Caco-2 (cell line): ENCODE measurements at regions of chr1 and their contacts with region 1.

Region 1: DNA sequence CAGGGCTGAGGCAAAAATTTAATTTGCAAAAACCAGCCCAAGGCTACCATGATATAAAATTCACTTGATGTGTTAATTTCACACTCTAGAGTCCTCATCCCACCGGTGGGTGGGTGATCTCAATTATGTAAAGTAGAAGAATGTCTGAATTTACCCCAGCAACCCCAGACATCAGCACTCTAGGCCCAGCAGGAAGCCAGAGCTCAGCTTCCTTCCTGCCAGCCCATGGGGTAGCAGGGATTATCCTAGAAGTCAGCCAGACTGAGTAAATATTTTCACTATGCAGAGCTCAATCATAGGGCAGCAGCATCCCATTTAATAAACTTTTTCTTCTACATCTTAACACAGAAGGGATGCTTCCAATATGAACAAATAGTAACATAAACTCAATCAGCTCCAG is 71.0 kb downstream of the SIPA1L2 start:
- DNase-seq: no peak
- H3K4me3 ChIP-seq: no peak overlapping the region
- H3K4me3 Mint-ChIP-seq: no peak overlapping the region
- H3K27ac Mint-ChIP-seq: no peak overlapping the region
- H3K4me1 ChIP-seq: peaks cover 58% of the 10 kb centered on the region
- H3K4me1 Mint-ChIP-seq: peaks cover 40% of the 10 kb centered on the region
- H3K27me3 ChIP-seq: no peaks in the 10 kb centered on the region
- H3K27me3 Mint-ChIP-seq: no peaks in the 10 kb centered on the region
- CTCF ChIP-seq: no peak

Region 2: DNA sequence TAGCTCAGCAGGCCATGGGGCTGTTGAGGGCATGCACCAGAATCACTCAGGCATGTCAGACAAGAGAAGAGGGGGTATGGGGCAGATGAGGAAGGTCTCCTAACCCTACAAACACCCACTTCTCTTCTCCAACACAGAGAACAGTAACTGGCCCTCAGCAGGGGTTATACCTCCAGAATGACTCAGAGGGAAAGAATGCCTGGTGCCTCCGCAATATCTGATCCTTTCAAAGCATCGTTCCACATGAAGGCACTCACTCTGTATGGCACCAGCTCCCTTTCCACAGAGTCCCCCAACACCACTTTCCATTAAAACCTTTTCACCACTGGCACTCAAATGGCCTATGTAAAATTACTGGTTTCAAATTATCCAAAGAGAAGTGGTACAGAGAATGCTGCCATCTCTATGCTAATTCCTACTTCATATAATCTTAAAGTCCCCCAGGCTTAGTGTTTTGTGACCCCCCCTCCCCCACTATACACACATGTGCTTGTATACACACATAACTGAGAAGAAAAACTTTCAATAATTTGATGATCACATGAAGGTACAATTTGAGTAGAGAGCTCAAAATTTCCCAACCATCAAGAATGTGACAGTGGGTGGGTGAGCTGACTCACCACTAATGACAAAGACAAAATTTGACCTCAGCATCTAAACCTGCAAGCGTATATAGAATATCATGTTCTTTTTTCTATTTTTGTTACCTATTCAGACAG is 20.6 kb before region 1 on chr1:
- CTCF ChIA-PET with region 1: no interaction called
- POLR2A ChIA-PET with region 1: no interaction called
- intact Hi-C with region 1: no loop called
- DNase-seq: peak; percentile 28 to 38
- H3K4me3 ChIP-seq: no peak overlapping the region
- H3K4me3 Mint-ChIP-seq: no peak overlapping the region
- H3K27ac Mint-ChIP-seq: no peak overlapping the region
- H3K4me1 ChIP-seq: peaks cover 17% of the 10 kb centered on the region; the same call in 1 of the 2 replicates
- H3K4me1 Mint-ChIP-seq: peaks cover 46% of the 10 kb centered on the region
- H3K27me3 ChIP-seq: no peaks in the 10 kb centered on the region
- H3K27me3 Mint-ChIP-seq: no peaks in the 10 kb centered on the region
- CTCF ChIP-seq: no peak

Region 3: DNA sequence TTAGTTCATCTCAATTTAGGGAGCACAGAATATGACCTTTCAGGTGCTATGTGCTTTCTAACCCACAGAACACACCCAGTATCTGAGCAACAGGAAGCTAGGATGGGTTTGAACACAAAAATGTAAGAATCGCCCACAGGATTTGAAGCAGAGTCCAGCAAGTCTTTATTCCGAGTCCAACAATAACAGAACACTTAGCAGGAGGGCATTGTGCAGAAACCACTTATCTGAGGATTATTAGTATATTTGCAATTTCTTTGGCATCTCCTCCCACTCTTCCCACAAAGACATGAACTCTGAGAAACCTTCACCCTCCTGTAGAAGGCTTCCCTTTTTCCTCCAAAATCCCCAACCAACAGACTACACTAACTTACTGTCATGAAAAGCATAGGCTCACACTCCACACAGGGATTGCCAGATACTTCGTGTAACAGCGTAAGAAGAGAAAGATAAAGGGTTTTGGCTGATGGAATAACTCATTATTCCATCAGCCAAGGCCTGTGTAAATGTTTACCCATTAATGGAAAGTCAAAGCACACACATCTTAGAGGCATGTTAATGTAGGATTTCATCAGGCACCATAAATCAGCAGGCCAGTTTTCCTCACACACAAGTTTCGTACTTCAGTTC is 54.9 kb after region 1 on chr1:
- CTCF ChIA-PET with region 1: no interaction called
- POLR2A ChIA-PET with region 1: interaction called, 4 read pairs
- intact Hi-C with region 1: loop called (anchors 5 kb)
- DNase-seq: peak in 1 of 2 experiments; percentile 16
- H3K4me3 ChIP-seq: no peak overlapping the region
- H3K4me3 Mint-ChIP-seq: no peak overlapping the region
- H3K27ac Mint-ChIP-seq: peak overlapping the region; percentile 6
- H3K4me1 ChIP-seq: peaks cover 14% of the 10 kb centered on the region; the same call in 1 of the 2 replicates
- H3K4me1 Mint-ChIP-seq: peaks cover 21% of the 10 kb centered on the region
- H3K27me3 ChIP-seq: no peaks in the 10 kb centered on the region
- H3K27me3 Mint-ChIP-seq: no peaks in the 10 kb centered on the region
- CTCF ChIP-seq: no peak